Activated CD4-positive, alpha-beta memory T cell treated with anti-CD3 and anti-CD28 coated beads for 36 hours (primary cell): ENCODE measurements at regions of chr18 and their contacts with region 1.

Region 1: GRCh38 chr18:2723207-2723606 is 67.7 kb downstream of the SMCHD1 start:
- DNase-seq: no peak
- H3K4me3 Mint-ChIP-seq: no peak overlapping the region
- H3K27ac Mint-ChIP-seq: peak overlapping the region; percentile 9
- H3K4me1 Mint-ChIP-seq: peaks cover 40% of the 10 kb centered on the region
- H3K27me3 Mint-ChIP-seq: no peaks in the 10 kb centered on the region

Region 2: DNA sequence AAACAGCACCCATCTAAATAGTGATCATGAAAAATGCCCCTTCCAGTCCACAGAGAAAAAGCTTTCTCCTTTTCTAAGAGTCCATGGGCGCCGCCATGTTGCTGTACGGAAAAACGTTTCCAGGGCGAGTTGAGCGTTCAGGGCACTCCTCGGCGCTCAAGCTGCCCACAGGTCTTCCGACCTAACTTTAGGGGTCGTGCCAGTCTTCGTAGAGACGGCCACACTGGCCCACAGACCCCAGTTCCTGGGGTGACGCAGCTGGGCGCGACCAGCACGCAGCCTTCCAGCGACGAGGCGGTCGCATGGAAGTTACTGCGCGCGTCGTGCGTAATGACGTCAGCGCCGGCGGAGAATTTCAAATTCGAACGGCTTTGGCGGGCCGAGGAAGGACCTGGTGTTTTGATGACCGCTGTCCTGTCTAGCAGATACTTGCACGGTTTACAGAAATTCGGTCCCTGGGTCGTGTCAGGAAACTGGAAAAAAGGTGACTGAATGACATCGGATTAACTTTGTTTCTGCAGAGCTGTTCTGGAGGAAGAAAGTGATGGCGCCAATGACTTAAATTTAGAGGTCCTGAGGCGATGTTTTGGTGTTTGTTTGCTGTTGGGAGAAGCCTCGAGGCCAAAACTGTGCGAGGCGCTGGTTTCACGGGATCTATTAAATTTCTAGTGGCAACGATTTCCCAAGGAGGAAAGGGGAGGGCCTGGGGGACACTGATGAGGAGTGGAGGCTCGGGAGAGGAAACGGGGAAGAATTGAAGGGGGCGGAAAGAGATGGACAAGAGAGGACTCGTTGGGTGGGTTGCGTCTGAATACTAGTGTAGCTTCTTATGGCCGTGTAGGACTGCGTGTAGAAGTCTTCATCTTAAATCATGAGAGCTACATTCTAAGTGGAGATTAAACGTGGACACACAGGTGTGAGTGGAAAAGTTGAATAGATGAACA is 151.7 kb before region 1 on chr18 and contains the starts of genes METTL4 and NDC80:
- CTCF ChIA-PET with region 1: no interaction called
- POLR2A ChIA-PET with region 1: no interaction called
- intact Hi-C with region 1: no loop called
- DNase-seq: peak; percentile 90
- H3K4me3 Mint-ChIP-seq: peak within 1 kb of the TSS; percentile 96
- H3K27ac Mint-ChIP-seq: peak within 1 kb of the TSS; percentile 95
- H3K4me1 Mint-ChIP-seq: peaks cover 51% of the 10 kb centered on the region
- H3K27me3 Mint-ChIP-seq: no peaks in the 10 kb centered on the region
- total RNA-seq, gene METTL4: 19.6 to 23.0 TPM
- total RNA-seq, gene NDC80: 79.3 to 83.1 TPM

Region 3: GRCh38 chr18:2758309-2758708 is 35.1 kb after region 1 on chr18:
- CTCF ChIA-PET with region 1: interaction called, 4 read pairs
- POLR2A ChIA-PET with region 1: no interaction called
- intact Hi-C with region 1: loop called (anchors 5 kb)
- DNase-seq: no peak
- H3K4me3 Mint-ChIP-seq: no peak overlapping the region
- H3K27ac Mint-ChIP-seq: peak overlapping the region; percentile 31
- H3K4me1 Mint-ChIP-seq: peaks cover 15% of the 10 kb centered on the region
- H3K27me3 Mint-ChIP-seq: no peaks in the 10 kb centered on the region

Region 4: GRCh38 chr18:2794159-2794558 is 71.0 kb after region 1 on chr18:
- CTCF ChIA-PET with region 1: no interaction called
- POLR2A ChIA-PET with region 1: no interaction called
- intact Hi-C with region 1: loop called (anchors 5 kb)
- DNase-seq: no peak
- H3K4me3 Mint-ChIP-seq: no peak overlapping the region
- H3K27ac Mint-ChIP-seq: no peak overlapping the region
- H3K4me1 Mint-ChIP-seq: no peaks in the 10 kb centered on the region
- H3K27me3 Mint-ChIP-seq: no peaks in the 10 kb centered on the region